ENCODE measurements at regions of chr11 and their contacts with region 1.

Region 1: DNA sequence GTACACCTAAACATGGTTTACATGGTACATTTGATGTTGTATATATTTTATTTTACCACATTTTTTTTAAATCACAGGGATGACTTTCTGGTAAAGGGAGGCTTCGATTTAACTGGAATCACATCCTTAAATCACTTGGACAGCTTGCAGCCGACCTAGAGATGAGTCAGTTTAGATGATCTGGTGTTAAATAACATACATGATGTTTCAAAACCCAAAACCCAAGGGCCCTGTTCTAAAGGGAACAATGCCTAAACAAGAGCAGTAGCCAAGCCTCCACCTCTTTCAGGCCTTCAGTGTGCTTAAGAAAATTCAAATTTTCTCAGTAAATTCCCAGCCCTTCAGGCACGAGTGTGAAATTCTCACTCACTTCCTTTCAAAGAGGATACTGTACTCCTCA is 108.8 kb downstream of the WT1 start:
- DNase-seq: no peak
- ATAC-seq: no peak
- H3K4me3 ChIP-seq: no peak overlapping the region
- H3K27ac ChIP-seq: no peak overlapping the region
- H3K4me1 ChIP-seq: no peaks in the 10 kb centered on the region
- H3K27me3 ChIP-seq: peaks cover 0 to 28% (median 14%) of the 10 kb centered on the region in 7 donors
- CTCF ChIP-seq: no peak

Region 2: GRCh38 chr11:32312865-32313403 is 13.6 kb before region 1 on chr11:
- intact Hi-C with region 1: no loop called
- DNase-seq: no peak
- ATAC-seq: peak in 6 of 8 donors; percentile 25 to 85 (median 54)
- H3K4me3 ChIP-seq: no peak overlapping the region
- H3K27ac ChIP-seq: no peak overlapping the region
- H3K4me1 ChIP-seq: no peaks in the 10 kb centered on the region
- H3K27me3 ChIP-seq: peaks cover 0 to 38% (median 10%) of the 10 kb centered on the region in 7 donors
- CTCF ChIP-seq: peak; percentile 22 to 65 (median 55)

Region 3: DNA sequence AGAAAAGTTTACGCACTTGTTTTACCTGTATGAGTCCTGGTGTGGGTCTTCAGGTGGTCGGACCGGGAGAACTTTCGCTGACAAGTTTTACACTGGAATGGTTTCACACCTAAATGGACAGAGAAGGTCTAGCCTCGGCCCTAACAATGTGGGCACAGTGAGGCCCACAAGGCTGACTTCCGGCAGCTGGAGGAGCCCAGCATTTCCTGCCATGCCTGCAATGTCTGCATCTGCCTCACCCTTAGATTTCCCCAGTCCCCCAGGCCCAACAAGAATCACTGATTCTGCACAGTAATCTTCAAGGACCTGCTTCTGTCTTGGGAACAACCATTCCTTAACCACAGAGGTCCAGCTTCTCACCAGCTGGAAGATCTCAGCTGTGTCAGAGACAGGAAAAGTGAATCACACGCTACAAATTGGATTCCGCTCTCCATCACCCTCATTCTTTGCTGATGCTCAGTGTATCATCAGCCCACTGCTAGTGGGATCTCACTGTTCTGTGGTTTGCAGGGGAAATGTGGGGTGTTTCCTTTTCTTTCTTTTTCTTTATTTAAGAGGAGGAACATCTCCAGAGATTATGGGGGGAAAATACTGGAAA is 65.5 kb after region 1 on chr11:
- intact Hi-C with region 1: loop called in 1 of 10 experiments (anchors 10 kb)
- DNase-seq: no peak
- ATAC-seq: no peak
- H3K4me3 ChIP-seq: no peak overlapping the region
- H3K27ac ChIP-seq: no peak overlapping the region
- H3K4me1 ChIP-seq: peaks cover 0 to 7% (median 1%) of the 10 kb centered on the region in 9 donors
- H3K27me3 ChIP-seq: no peaks in the 10 kb centered on the region
- CTCF ChIP-seq: no peak

Region 4: DNA sequence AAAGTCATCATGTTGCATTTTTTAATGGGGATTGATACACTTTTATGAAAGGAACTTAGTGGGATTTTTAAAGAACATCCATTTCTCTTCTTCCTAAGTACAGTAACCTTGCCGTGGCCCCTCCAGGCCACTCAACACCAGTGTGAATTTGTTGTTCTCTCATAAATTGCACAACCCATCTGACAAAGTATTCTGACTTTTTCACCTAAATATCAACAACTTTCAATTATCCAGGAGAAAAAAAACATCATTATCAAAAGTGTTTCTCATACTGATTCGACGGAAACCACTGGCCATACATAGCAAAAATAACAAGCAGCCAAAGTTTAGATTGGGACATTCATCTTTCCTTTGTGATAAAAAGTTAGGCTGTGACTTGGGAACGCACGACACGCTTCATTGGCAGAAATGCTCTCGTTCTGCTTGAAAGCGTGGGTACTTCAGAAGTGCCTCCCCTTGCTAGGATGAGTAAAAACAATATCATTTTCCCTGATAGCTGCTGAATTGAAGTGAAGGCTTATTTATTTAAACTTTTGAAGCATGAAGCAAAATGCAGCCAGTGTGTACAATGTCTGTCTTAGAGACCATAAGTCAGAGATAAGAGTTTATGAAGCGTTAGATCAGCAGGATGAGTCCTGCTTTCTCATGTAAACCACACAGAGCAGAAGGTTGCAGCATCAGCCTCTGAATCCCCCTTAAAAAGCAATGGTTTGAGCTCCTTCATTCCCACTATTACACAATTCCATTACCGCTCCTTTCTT is 236.5 kb after region 1 on chr11:
- intact Hi-C with region 1: loop called in 1 of 10 experiments (anchors 10 kb)
- DNase-seq: no peak
- ATAC-seq: no peak
- H3K4me3 ChIP-seq: no peak overlapping the region
- H3K27ac ChIP-seq: no peak overlapping the region
- H3K4me1 ChIP-seq: peaks cover 0 to 5% (median 0%) of the 10 kb centered on the region in 9 donors
- H3K27me3 ChIP-seq: peaks cover 0 to 4% (median 0%) of the 10 kb centered on the region in 7 donors
- CTCF ChIP-seq: no peak

Region 5: DNA sequence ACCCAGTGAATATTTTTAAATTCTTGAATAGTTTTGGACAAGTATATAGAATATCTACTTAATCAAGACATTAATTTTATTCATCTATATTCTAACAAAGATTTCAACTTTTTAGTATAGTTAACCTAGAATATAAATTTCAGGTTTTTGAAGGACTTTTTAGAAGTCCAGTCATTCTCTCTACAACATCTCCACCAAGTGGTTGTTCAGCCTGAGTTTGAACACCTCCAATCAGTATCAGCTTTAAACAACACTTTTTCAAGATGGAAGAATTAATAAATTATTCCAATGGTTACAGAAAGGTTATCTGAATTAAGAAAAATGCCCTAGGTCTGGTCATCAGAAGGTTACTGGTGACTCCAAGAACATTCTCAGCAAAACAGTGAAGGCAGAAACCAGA is 288.9 kb after region 1 on chr11:
- intact Hi-C with region 1: loop called in 4 of 10 experiments (anchors 5 to 10 kb)
- DNase-seq: no peak
- ATAC-seq: no peak
- H3K4me3 ChIP-seq: no peak overlapping the region
- H3K27ac ChIP-seq: no peak overlapping the region
- H3K4me1 ChIP-seq: peaks cover 0 to 8% (median 0%) of the 10 kb centered on the region in 9 donors
- H3K27me3 ChIP-seq: no peaks in the 10 kb centered on the region
- CTCF ChIP-seq: peak in 4 of 9 donors; percentile 33 to 50 (median 42)

Region 6: DNA sequence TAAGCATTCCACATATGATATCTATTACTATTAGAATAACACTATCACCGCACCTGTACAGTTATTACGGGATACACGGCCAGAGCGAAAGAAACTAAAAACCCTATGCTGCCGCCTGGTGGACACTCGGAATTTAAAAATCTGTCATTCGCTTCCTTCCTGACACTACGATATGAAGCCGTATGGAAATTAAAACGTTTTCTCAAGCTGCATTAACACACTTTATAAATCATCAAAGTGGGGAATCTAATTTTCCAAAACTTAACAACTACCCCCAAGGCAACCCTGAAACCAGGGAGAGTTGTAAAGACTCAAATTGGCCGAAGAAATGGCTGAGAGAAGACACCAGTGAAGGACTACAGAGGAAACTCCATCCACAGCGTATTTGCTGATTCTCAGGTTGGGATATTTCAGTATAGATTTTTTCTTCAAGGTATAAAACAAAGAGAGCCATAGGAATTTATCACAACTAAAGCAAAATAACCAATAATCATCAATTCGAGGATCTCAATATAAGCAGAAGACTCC is 466.5 kb after region 1 on chr11:
- intact Hi-C with region 1: loop called (anchors 2 to 10 kb)
- DNase-seq: peak; percentile 24 to 51
- ATAC-seq: peak in 6 of 8 donors; percentile 20 to 79 (median 58)
- H3K4me3 ChIP-seq: peak overlapping the region in 5 of 10 donors; percentile 0 to 21 (median 12)
- H3K27ac ChIP-seq: no peak overlapping the region
- H3K4me1 ChIP-seq: peaks cover 0 to 9% (median 0%) of the 10 kb centered on the region in 9 donors
- H3K27me3 ChIP-seq: peaks cover 0 to 20% (median 6%) of the 10 kb centered on the region in 7 donors
- CTCF ChIP-seq: peak; percentile 43 to 79 (median 72)